K562 (cell line): ENCODE measurements at regions of chr1 and their contacts with region 1.

Region 1: GRCh38 chr1:27671964-27672749 is at the start of gene IFI6:
- DNase-seq: peak; percentile 79 to 97 (median 86)
- ATAC-seq: peak; percentile 94
- H3K4me3 ChIP-seq: peak within 1 kb of the TSS; percentile 38
- H3K27ac ChIP-seq: peak within 1 kb of the TSS; percentile 42; the same call in 2 of the 3 replicates
- H3K4me1 ChIP-seq: peaks cover 20 to 24% of the 10 kb centered on the region in 2 experiments
- H3K27me3 ChIP-seq: no peaks in the 10 kb centered on the region
- CTCF ChIP-seq: peak; percentile 49 to 64 (median 56); a peak in 5 of 6 replicates
- EP300 ChIP-seq: no peak
- POLR2A ChIP-seq: no peak
- RAD21 ChIP-seq: peak; percentile 33 to 46; a peak in 3 of 4 replicates
- polyA plus RNA-seq, gene IFI6: 0.17 to 0.76 TPM

Region 2: GRCh38 chr1:27102707-27103491 is 569.3 kb before region 1 on chr1:
- CTCF ChIA-PET with region 1: no interaction called
- POLR2A ChIA-PET with region 1: no interaction called
- in situ Hi-C with region 1: loop called (anchors 5 kb)
- intact Hi-C with region 1: no loop called
- DNase-seq: peak; percentile 85 to 90 (median 88)
- ATAC-seq: peak; percentile 89
- H3K4me3 ChIP-seq: no peak overlapping the region
- H3K27ac ChIP-seq: no peak overlapping the region
- H3K4me1 ChIP-seq: peaks cover 18 to 57% of the 10 kb centered on the region in 2 experiments
- H3K27me3 ChIP-seq: no peaks in the 10 kb centered on the region; a peak in 1 of 5 replicates
- CTCF ChIP-seq: peak; percentile 97 to 99 (median 97)
- EP300 ChIP-seq: no peak
- POLR2A ChIP-seq: no peak
- RAD21 ChIP-seq: peak; percentile 95 to 98

Region 3: GRCh38 chr1:27725374-27726173 is 53.4 kb after region 1 on chr1 and contains the start of gene FAM76A:
- CTCF ChIA-PET with region 1: no interaction called
- POLR2A ChIA-PET with region 1: no interaction called
- in situ Hi-C with region 1: no loop called
- intact Hi-C with region 1: loop called (anchors 1 kb)
- DNase-seq: peak; percentile 100
- ATAC-seq: peak; percentile 98
- H3K4me3 ChIP-seq: peak within 1 kb of the TSS; percentile 86
- H3K27ac ChIP-seq: peak within 1 kb of the TSS; percentile 72
- H3K4me1 ChIP-seq: peaks cover 13 to 18% of the 10 kb centered on the region in 2 experiments; a peak in 4 of 5 replicates
- H3K27me3 ChIP-seq: no peaks in the 10 kb centered on the region
- CTCF ChIP-seq: peak; percentile 69 to 94 (median 83)
- EP300 ChIP-seq: peak; percentile 44
- POLR2A ChIP-seq: peak; percentile 42; the same call in 1 of the 2 replicates
- RAD21 ChIP-seq: peak; percentile 28 to 43; a peak in 1 of 4 replicates
- polyA plus RNA-seq, gene FAM76A: 9.5 to 14.6 TPM

Region 4: DNA sequence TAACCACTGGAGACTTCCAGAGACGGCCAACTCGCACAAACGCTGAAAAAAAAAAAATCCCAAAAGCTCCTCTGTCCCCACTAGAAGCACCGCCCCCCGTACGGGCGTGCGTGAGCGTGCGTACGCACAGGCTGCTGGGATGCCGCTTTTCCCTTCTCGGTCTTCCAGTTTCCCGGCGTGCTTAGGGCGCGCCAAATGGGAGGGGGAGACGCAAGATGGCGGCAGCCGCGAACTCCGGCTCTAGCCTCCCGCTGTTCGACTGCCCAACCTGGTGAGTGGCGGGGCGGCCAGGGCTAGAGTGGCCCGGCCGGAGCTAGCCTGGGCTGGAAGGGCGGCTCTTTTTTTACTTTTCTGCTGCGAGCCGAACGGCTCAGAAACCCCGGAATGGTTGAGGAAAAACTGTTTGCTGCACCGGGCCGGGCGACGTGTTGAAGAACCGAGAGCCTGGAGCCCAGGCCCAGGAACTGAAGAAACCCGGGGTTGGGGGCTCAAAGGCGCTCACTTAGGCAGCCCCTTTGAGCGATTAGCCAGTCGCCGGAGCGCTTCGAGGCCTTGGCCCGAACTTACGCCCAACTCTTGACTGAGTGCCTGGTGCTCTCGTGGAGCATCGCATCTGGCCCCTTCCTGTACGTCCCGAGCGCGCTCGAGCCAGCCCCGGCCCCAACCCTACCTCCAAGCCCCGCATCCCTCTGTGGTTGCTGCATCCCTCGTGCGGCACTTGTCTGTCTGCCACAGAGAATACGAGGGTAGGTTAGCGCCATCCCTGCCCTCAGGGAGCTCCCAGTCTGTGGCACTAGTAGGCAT is 158.7 kb after region 1 on chr1 and contains the start of gene PPP1R8:
- CTCF ChIA-PET with region 1: interaction called, 3 read pairs
- POLR2A ChIA-PET with region 1: interaction called, 3 read pairs
- in situ Hi-C with region 1: no loop called
- intact Hi-C with region 1: loop called (anchors 5 kb)
- DNase-seq: peak; percentile 90 to 99 (median 93)
- ATAC-seq: peak; percentile 99
- H3K4me3 ChIP-seq: peak within 1 kb of the TSS; percentile 61
- H3K27ac ChIP-seq: peak within 1 kb of the TSS; percentile 82
- H3K4me1 ChIP-seq: peaks cover 7 to 14% of the 10 kb centered on the region in 2 experiments; a peak in 3 of 5 replicates
- H3K27me3 ChIP-seq: no peaks in the 10 kb centered on the region
- CTCF ChIP-seq: no peak
- EP300 ChIP-seq: no peak
- POLR2A ChIP-seq: peak; percentile 99
- RAD21 ChIP-seq: no peak
- polyA plus RNA-seq, gene PPP1R8: 16.2 to 20.2 TPM

Region 5: GRCh38 chr1:27959400-27960217 is 287.5 kb after region 1 on chr1 and contains the start of gene XKR8:
- CTCF ChIA-PET with region 1: no interaction called
- POLR2A ChIA-PET with region 1: no interaction called
- in situ Hi-C with region 1: no loop called
- intact Hi-C with region 1: no loop called
- DNase-seq: peak; percentile 70 to 87 (median 82)
- ATAC-seq: peak; percentile 88
- H3K4me3 ChIP-seq: peak within 1 kb of the TSS; percentile 39
- H3K27ac ChIP-seq: peak within 1 kb of the TSS; percentile 61; the same call in 2 of the 3 replicates
- H3K4me1 ChIP-seq: peaks cover 0 to 28% of the 10 kb centered on the region in 2 experiments; a peak in 3 of 5 replicates
- H3K27me3 ChIP-seq: peaks cover 1 to 6% of the 10 kb centered on the region in 2 experiments; a peak in 2 of 5 replicates
- CTCF ChIP-seq: 0 out of 6 replicates have a peak, but pooled peaks of 1 of the 3 experiments have one; percentile 95
- EP300 ChIP-seq: no peak
- POLR2A ChIP-seq: no peak; the same call in none of the 2 replicates
- RAD21 ChIP-seq: peak in 1 of 2 experiments; percentile 26; a peak in 1 of 4 replicates
- polyA plus RNA-seq, gene XKR8: 0.49 to 0.73 TPM